ENCODE measurements at regions of chr22 and their contacts with region 1.

Region 1: GRCh38 chr22:23178512-23179254 is 1.6 kb upstream of the BCR start:
- DNase-seq: peak; percentile 58 to 84 (median 72)
- H3K4me3 ChIP-seq: peak overlapping the region in 5 of 59 donors; percentile 16 to 71 (median 54)
- H3K27ac ChIP-seq: peak overlapping the region in 43 of 59 donors; percentile 7 to 82 (median 68)
- H3K27me3 ChIP-seq: no peaks in the 10 kb centered on the region
- CTCF ChIP-seq: peak; percentile 88 to 99 (median 97)

Region 2: DNA sequence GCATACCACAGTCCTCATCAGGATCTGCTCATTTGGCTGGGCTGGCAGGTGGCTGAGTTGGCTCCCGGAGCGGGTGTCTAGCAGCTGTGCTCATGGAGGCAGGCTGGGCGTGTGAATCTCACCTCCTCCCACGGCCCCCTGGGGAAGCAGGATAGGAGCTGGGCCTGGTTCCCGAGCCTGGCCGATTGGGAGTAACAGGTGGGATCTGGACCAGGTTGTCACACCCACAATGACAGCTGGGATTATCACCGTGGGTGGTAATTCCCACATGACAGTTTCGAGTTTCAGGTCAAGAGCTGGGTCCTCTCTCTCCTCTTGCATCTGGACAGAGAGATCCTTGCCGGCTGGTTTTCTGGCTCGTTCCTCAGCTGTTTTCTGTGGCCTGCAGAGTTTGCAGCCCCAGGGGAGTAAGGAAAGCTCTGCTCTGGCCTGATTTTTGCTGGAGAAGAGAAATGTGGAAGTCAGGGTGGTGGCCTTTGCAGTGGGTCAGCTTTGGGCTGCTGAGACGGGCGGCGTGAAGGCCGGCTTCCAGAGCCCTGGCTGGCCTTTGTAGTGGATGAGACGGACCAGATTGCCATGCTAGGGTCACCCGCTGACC is 58.6 kb after region 1 on chr22:
- intact Hi-C with region 1: loop called in 1 of 2 experiments (anchors 2 kb)
- DNase-seq: peak; percentile 43 to 92 (median 84)
- H3K4me3 ChIP-seq: peak overlapping the region in 3 of 59 donors; percentile 13 to 24 (median 16)
- H3K27ac ChIP-seq: peak overlapping the region in 41 of 59 donors; percentile 5 to 82 (median 51)
- H3K27me3 ChIP-seq: no peaks in the 10 kb centered on the region
- CTCF ChIP-seq: no peak

Region 3: DNA sequence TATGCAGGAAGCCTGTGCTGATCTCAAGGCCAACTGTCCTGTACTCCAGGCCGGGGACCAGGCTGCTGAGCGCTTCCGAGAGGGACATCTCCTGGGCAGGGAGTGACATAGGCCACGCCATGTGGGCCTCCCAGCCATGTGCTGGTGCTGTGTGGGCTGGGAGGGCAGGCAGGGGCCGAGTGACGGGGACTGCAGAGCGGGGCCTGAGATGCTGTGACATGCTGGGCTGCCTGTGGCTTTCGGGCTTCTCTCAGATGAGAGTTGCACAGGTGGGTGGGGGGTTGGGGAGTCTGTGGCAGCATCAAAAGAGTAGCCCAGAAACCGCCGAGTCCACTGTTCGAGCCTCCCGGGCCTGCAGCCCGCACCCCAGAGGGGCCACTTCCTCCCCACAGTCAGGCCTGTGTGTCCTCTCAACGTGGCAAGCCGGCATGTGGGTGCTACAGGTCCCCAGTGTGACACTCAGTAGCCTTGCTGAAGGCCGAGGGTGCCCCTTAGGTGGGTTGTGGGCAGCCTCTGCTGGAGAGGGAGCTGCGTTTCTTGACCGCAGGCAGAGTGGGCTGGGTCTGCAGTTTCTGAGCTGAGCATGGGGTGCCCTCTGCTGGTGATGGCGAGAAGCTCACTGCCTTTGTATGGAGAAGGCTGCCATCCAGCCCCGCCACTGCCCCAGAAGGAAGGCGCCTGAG is 102.9 kb after region 1 on chr22:
- intact Hi-C with region 1: loop called (anchors 1 kb)
- DNase-seq: peak; percentile 84 to 92 (median 91)
- H3K4me3 ChIP-seq: peak overlapping the region in 3 of 59 donors; percentile 9 to 17 (median 13)
- H3K27ac ChIP-seq: peak overlapping the region in 52 of 59 donors; percentile 2 to 85 (median 68)
- H3K27me3 ChIP-seq: no peaks in the 10 kb centered on the region
- CTCF ChIP-seq: peak; percentile 85 to 99 (median 97)

Region 4: GRCh38 chr22:23376256-23376655 is 197.6 kb after region 1 on chr22:
- intact Hi-C with region 1: no loop called
- DNase-seq: no peak
- H3K4me3 ChIP-seq: no peak overlapping the region
- H3K27ac ChIP-seq: no peak overlapping the region
- H3K27me3 ChIP-seq: no peaks in the 10 kb centered on the region
- CTCF ChIP-seq: no peak

Region 5: GRCh38 chr22:23414727-23415431 is 236.2 kb after region 1 on chr22:
- intact Hi-C with region 1: no loop called
- DNase-seq: peak in 1 of 10 donors; percentile 33
- H3K4me3 ChIP-seq: no peak overlapping the region
- H3K27ac ChIP-seq: no peak overlapping the region
- H3K27me3 ChIP-seq: no peaks in the 10 kb centered on the region
- CTCF ChIP-seq: no peak